Cardiac septum (tissue), 1 donor: ENCODE measurements at regions of chr1 and their contacts with region 1.

Region 1: DNA sequence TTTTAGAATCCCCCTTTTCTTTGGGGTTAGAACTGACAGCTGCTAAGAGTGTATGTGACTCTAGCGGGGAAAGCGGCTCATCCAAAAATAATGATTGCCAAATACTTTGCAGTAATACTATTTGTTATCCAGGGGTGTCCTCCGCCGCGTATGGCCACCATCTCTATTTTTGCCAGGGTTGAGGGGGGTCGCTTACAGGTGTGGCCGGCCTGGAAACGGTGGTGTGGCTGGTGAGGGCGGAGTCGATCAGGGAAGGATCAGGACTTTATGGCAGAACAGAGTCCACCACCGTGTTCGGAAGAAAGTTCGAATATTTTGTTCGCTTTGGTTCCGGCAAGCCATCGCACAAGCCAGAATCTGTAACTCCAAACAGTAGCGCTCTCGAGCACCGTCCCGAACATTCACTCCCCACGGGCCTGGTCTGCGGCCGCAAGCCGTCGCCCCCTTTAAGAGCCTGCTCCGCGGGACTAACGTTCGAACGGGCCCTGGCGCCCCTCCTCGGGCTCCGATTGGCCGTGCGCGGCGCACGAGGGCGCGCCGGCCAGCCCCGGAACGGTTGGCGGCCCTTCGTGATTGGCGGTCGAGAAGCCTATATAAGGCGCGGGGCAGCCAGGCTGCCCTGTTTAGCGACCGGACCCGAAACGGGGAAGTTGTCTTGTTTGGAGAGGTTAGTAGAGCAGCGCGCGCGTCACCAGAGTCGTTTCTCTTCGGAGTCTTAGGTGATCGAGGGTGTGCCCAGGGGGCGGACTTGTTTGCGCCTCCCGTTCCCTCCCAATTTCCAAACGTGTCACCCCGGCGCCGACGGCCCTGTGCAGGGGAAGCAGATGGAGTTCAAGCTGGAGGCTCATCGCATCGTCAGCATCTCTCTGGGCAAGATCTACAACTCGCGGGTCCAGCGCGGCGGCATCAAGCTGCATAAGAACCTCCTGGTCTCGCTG is at the start of gene IER5:
- DNase-seq: peak; percentile 99
- total RNA-seq, gene IER5: 20.5 TPM

Region 2: GRCh38 chr1:180631766-180632325 is 456.5 kb before region 1 on chr1 and contains the start of gene XPR1:
- intact Hi-C with region 1: loop called (anchors 5 kb)
- DNase-seq: peak; percentile 99
- total RNA-seq, gene XPR1: 147 TPM

Region 3: GRCh38 chr1:180912801-180913565 is 175.4 kb before region 1 on chr1 and contains the start of gene KIAA1614:
- intact Hi-C with region 1: no loop called
- DNase-seq: peak; percentile 82
- total RNA-seq, gene KIAA1614: 11.4 TPM

Region 4: GRCh38 chr1:180964595-180964994 is 123.8 kb before region 1 on chr1:
- intact Hi-C with region 1: no loop called
- DNase-seq: no peak

Region 5: DNA sequence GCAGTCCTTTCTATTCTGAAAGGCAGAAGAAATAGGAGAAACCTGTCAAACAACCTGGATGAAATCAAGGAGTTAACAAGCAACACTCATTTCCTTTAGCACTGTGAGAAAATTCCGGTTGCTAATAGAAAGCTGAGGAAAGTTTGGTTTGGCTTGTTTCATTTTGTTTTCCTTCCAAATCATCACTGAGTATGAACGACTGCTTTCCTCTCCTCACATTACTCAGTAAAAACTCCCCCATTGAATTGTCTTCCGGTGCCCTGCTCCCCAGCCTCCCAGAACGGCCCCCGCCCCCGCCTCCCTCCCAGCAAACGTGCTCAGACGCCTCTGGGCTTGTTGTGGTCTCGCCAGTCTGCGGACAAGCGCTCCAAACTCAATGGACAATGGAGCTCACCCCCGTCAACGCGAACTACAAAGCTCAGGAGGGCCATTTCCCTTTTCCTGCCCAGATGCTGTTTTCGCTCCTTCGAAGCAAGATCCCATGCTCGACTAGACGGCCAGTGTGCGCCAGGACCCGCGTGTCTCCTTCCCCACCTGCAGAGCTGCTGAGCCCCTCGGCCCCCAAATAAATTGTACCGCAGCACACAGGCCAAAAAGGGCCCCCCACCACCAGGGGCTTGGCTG is 66.4 kb before region 1 on chr1:
- intact Hi-C with region 1: loop called (anchors 2 kb)
- DNase-seq: peak; percentile 85

Region 6: DNA sequence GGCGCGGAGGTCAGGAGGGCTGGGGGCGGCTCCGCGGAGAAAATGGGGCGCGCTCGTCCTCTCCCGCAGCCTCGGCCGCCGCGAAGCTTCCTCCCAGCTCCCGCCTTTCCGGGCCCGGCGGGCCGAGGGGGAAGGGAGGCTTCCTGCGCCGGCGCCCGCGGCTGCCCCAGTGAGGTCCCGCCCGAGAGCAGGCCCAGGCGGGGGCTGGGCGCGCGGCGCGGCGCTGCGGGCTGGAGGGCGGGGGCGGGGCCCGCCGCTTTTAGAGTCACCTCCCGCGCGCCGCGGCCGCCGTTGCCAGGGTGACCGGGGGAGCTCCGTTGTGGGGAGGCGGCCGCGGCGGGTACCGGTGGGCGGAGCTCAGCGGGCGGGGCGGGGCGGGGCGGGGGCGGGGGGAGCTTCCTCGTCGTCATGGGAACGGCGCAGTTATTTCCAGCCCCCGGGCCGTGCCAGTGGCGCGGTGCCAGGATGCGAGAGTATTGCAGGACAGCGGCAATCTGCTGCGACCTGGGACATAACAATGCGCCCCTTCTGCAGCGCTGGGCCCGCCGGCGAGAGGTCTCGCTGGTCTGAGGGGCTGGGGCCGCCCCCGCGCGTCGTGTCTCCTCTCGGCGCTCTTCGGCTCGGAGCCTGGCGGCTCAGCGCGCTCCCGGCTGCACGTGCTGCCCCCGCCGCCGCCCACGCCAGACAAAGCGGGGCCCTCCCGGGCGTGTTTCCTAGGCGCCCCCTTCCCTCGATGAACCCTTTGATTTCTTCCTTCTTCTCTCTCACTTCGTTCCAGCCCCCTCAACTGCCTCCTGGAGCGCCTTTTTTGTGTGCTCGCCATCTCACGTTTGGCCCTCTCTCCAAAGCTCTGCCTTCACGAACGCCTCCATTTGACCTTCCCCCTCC is 17.0 kb after region 1 on chr1:
- intact Hi-C with region 1: loop called (anchors 1 kb)
- DNase-seq: peak; percentile 98

Region 7: GRCh38 chr1:181134543-181135362 is 46.4 kb after region 1 on chr1:
- intact Hi-C with region 1: no loop called
- DNase-seq: no peak

Region 8: DNA sequence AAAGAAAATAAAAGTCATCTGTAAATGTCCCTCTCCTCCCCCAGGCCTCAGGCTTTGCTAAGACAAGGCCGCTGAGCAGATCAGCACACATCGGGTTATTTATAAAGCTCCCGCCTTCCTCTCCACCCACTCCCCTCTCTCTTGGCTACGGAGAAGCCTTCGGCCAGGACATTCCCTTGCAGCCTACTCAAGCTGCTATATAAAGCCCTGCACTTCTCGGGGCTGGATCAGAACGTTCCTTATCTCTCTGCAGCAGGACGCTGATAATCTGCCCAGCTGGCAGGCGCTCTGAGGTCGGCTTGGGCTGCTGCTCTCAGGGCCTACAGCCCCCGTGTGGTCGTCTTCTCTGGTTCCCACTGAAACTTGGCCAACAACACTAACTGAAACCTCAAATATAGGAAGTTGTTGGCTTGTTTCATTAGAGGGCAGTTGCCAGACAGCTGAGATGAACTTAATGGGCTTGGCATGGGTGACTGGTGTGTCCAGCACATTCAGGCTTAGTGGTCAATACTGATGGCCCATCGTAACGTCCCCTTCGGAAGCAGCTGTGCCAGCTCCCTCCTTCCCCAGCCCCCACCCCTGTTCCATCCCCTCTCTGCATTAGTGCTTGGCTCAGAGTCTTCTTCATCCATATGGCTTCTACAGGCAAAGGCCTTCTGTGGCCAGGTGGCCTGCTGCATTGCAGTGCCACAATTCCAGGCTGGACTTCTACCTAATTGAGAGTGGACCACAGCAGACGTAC is 64.7 kb after region 1 on chr1:
- intact Hi-C with region 1: loop called (anchors 2 kb)
- DNase-seq: peak; percentile 90